ENCODE measurements at regions of chr5 and their contacts with region 1.

Region 1: GRCh38 chr5:88736494-88736893 is 146.5 kb downstream of the MEF2C start:
- DNase-seq: no peak
- H3K4me3 ChIP-seq: no peak overlapping the region
- H3K27ac ChIP-seq: no peak overlapping the region
- H3K4me1 ChIP-seq: peaks cover 3% of the 10 kb centered on the region
- H3K27me3 ChIP-seq: no peaks in the 10 kb centered on the region
- CTCF ChIP-seq: no peak
- EP300 ChIP-seq: no peak
- POLR2A ChIP-seq: no peak

Region 2: GRCh38 chr5:88875341-88876234 is 139.1 kb after region 1 on chr5:
- intact Hi-C with region 1: loop called in 2 of 4 experiments (anchors 5 to 10 kb)
- DNase-seq: no peak
- H3K4me3 ChIP-seq: no peak overlapping the region
- H3K27ac ChIP-seq: no peak overlapping the region
- H3K4me1 ChIP-seq: peaks cover 2% of the 10 kb centered on the region
- H3K27me3 ChIP-seq: no peaks in the 10 kb centered on the region
- CTCF ChIP-seq: no peak
- EP300 ChIP-seq: no peak
- POLR2A ChIP-seq: no peak

Measured in ovary (tissue), 10 donors.